ENCODE measurements at regions of chr7 and their contacts with region 1.

Region 1: GRCh38 chr7:32204361-32205018 is 134.3 kb upstream of the PDE1C start:
- DNase-seq: peak; percentile 70
- H3K4me3 ChIP-seq: no peak overlapping the region
- H3K27ac ChIP-seq: no peak overlapping the region
- H3K4me1 ChIP-seq: no peaks in the 10 kb centered on the region
- H3K27me3 ChIP-seq: peaks cover 0 to 4% of the 10 kb centered on the region in 2 experiments
- CTCF ChIP-seq: peak; percentile 59 to 67
- POLR2A ChIP-seq: no peak

Region 2: GRCh38 chr7:31443457-31443856 is 761.0 kb before region 1 on chr7:
- CTCF ChIA-PET with region 1: interaction called, 14 read pairs
- POLR2A ChIA-PET with region 1: no interaction called
- dilution Hi-C with region 1: no loop called
- intact Hi-C with region 1: loop called (anchors 1 kb)
- DNase-seq: peak; percentile 48
- H3K4me3 ChIP-seq: no peak overlapping the region
- H3K27ac ChIP-seq: no peak overlapping the region
- H3K4me1 ChIP-seq: no peaks in the 10 kb centered on the region
- H3K27me3 ChIP-seq: peaks cover 0 to 4% of the 10 kb centered on the region in 2 experiments
- CTCF ChIP-seq: peak; percentile 63 to 67
- POLR2A ChIP-seq: no peak

Region 3: DNA sequence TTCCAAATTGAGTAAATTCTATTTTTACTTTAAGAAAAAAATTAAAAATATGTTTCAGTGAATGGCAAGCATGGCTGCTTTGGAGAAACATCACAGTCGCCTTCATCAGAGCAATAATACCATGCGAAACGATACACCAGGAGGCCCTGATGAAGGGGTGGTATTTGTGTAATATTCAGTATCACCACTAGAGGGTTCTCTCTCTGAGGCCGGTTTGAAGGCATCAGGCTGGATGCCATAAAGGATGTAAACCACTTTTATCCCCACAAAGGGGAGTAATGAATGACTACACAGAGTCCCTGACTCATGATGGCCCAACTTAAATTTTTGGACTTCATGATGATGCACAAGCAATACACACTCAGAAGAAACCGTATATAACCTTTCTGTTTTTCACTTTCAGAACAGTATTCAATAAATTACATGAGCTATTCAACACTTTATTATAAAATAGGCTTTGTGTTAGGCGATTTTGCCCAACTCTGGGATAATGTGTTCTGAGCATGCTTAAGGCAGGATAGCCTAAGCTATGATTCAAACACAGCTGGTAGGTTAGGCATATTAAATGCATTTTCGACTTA is 422.0 kb before region 1 on chr7:
- CTCF ChIA-PET with region 1: interaction called, 12 read pairs
- POLR2A ChIA-PET with region 1: no interaction called
- dilution Hi-C with region 1: no loop called
- intact Hi-C with region 1: loop called (anchors 1 kb)
- DNase-seq: peak; percentile 69
- H3K4me3 ChIP-seq: no peak overlapping the region
- H3K27ac ChIP-seq: no peak overlapping the region
- H3K4me1 ChIP-seq: no peaks in the 10 kb centered on the region
- H3K27me3 ChIP-seq: no peaks in the 10 kb centered on the region
- CTCF ChIP-seq: peak; percentile 68 to 70
- POLR2A ChIP-seq: no peak

Region 4: DNA sequence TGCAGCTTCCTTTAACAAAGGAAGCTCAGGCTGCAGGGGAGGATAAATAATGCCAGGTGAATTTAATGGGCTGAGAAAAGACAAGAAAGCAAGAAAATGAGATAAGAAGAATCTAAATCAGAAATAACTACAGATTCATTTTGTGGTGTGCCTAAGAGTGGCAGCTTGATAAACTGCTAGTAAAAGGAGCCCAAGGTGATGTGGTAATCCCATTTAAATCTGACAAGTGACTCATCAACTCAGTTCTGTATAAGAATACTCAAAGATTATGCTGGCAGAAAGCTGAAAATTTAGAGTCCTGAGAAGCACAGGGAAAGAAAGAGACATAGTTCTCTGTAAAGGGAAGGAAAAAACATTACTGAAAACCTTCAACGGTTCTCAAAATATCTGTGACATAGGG is 24.9 kb before region 1 on chr7:
- CTCF ChIA-PET with region 1: no interaction called
- POLR2A ChIA-PET with region 1: no interaction called
- dilution Hi-C with region 1: no loop called
- intact Hi-C with region 1: no loop called
- DNase-seq: no peak
- H3K4me3 ChIP-seq: no peak overlapping the region
- H3K27ac ChIP-seq: no peak overlapping the region
- H3K4me1 ChIP-seq: no peaks in the 10 kb centered on the region
- H3K27me3 ChIP-seq: peaks cover 0 to 8% of the 10 kb centered on the region in 2 experiments
- CTCF ChIP-seq: no peak
- POLR2A ChIP-seq: no peak

Region 5: GRCh38 chr7:32275216-32275979 is 70.9 kb after region 1 on chr7:
- CTCF ChIA-PET with region 1: interaction called, 10 read pairs
- POLR2A ChIA-PET with region 1: no interaction called
- dilution Hi-C with region 1: no loop called
- intact Hi-C with region 1: no loop called
- DNase-seq: no peak
- H3K4me3 ChIP-seq: no peak overlapping the region
- H3K27ac ChIP-seq: no peak overlapping the region
- H3K4me1 ChIP-seq: no peaks in the 10 kb centered on the region
- H3K27me3 ChIP-seq: no peaks in the 10 kb centered on the region
- CTCF ChIP-seq: no peak
- POLR2A ChIP-seq: no peak

Region 6: DNA sequence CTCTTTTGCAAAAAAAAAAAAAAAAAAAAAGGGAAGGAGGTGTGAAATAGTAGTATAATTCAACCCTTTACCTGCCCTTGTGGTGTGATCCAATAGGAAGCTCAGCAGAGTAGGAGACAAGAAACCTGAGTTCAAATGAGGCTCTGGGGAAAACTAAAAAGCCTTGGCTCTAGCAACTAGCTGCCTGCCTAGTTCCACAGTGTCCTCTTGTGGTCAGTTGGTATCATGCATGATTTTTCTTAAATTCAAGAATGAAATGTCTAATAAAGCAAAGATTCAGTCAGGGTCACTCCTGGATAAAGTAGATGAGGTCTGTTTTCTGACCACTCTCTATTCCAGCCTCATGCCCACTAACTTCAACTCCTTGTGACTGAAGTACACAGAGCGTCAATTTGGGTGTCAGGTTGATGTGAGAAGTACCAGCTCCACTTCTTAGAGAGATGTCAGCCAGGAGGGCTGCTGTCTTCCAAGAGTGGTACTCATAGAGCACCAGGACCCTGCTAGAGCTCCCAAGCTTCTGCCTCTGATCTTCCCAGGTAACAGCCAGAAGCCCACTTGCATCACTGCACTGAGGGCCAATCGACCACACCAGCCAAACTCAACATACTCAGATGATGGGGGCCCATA is 275.2 kb after region 1 on chr7:
- CTCF ChIA-PET with region 1: interaction called, 163 read pairs
- POLR2A ChIA-PET with region 1: no interaction called
- dilution Hi-C with region 1: no loop called
- intact Hi-C with region 1: no loop called
- DNase-seq: peak; percentile 44
- H3K4me3 ChIP-seq: no peak overlapping the region
- H3K27ac ChIP-seq: no peak overlapping the region
- H3K4me1 ChIP-seq: peaks cover 6% of the 10 kb centered on the region
- H3K27me3 ChIP-seq: peaks cover 0 to 3% of the 10 kb centered on the region in 2 experiments
- CTCF ChIP-seq: peak; percentile 77 to 80
- POLR2A ChIP-seq: no peak

Measured in endothelial cell of umbilical vein (primary cell).